ENCODE measurements at regions of chr3 and their contacts with region 1.

Region 1: DNA sequence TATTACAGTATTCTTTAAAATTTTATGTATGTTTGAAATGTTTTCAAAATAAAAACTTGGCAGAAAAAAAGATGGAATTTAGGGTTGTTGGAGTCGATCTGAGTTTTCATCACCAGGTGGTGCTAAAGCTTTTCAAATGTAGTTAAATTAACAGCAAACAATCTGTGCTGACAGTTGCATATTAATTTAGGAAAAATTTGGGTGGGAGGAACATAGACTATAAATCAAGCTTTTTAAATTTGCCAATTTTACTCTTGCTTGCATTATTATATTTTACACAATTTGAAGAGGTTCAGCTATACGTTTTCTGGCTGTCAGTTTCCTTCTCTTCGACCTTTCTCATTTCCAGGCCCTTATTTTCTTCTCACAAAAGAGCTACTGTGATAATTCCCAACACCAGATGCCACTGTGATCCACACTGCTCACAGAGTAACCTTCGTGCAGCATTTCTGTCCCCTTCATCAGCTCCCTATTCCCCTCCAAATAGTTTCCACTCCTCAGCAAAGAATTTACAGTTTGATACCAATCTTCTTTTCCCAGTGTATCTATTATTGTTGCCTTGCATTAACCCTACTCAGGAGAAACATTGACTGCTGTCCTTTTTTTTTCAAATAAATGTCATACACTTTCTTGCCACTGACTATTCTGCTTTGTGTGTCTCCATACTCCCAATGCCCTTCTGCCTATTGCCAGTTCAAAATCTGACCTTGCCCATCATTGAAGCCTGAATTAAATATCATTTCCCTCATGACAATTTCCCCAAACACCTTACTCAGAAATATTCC is 53.4 kb upstream of the EIF5A2 start:
- DNase-seq: peak; percentile 50
- H3K4me3 Mint-ChIP-seq: no peak overlapping the region
- H3K27ac Mint-ChIP-seq: peak overlapping the region; percentile 8
- H3K4me1 Mint-ChIP-seq: peaks cover 27% of the 10 kb centered on the region
- H3K27me3 Mint-ChIP-seq: no peaks in the 10 kb centered on the region
- CTCF ChIP-seq: peak; percentile 84

Region 2: DNA sequence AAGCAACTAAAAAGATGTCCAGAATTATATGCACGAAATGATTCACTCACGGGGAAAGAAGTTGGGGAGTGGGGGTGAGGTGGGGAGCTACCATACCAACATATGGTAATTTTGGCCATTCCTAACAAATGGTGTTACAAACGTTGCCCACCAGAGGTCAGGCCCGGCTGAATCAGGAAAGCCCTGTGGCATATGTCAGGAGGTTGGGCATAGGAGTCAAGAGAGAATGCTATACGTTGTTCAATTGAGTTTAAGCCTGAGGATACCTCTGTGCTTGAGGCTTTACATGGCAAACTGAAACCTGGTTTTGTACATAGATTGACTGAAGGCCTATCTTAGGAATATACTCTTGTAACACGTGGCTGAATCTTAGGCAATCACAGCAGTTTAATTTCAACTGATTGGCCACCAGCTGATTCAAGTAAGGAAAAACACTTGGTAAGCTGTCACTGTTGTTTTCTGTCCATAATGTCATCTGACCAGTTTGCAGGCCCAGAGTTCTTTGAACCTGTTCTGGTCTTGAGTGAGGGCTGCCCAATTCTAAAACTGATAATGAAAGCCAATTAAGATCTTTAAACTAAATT is 88.1 kb after region 1 on chr3:
- CTCF ChIA-PET with region 1: interaction called, 16 read pairs
- intact Hi-C with region 1: loop called (anchors 1 kb)
- DNase-seq: peak; percentile 80
- H3K4me3 Mint-ChIP-seq: no peak overlapping the region
- H3K27ac Mint-ChIP-seq: peak overlapping the region; percentile 11
- H3K4me1 Mint-ChIP-seq: peaks cover 28% of the 10 kb centered on the region
- H3K27me3 Mint-ChIP-seq: no peaks in the 10 kb centered on the region
- CTCF ChIP-seq: peak; percentile 90

Region 3: GRCh38 chr3:171187706-171188290 is 226.0 kb after region 1 on chr3:
- CTCF ChIA-PET with region 1: interaction called, 17 read pairs
- intact Hi-C with region 1: loop called (anchors 1 kb)
- DNase-seq: peak; percentile 54
- H3K4me3 Mint-ChIP-seq: no peak overlapping the region
- H3K27ac Mint-ChIP-seq: no peak overlapping the region
- H3K4me1 Mint-ChIP-seq: peaks cover 46% of the 10 kb centered on the region
- H3K27me3 Mint-ChIP-seq: no peaks in the 10 kb centered on the region
- CTCF ChIP-seq: peak; percentile 91

Region 4: GRCh38 chr3:171566803-171567422 is 605.1 kb after region 1 on chr3:
- CTCF ChIA-PET with region 1: interaction called, 9 read pairs
- intact Hi-C with region 1: loop called (anchors 1 kb)
- DNase-seq: peak; percentile 21
- H3K4me3 Mint-ChIP-seq: no peak overlapping the region
- H3K27ac Mint-ChIP-seq: no peak overlapping the region
- H3K4me1 Mint-ChIP-seq: no peaks in the 10 kb centered on the region
- H3K27me3 Mint-ChIP-seq: no peaks in the 10 kb centered on the region
- CTCF ChIP-seq: peak; percentile 87